ENCODE measurements at regions of chr2 and their contacts with region 1.

Region 1: DNA sequence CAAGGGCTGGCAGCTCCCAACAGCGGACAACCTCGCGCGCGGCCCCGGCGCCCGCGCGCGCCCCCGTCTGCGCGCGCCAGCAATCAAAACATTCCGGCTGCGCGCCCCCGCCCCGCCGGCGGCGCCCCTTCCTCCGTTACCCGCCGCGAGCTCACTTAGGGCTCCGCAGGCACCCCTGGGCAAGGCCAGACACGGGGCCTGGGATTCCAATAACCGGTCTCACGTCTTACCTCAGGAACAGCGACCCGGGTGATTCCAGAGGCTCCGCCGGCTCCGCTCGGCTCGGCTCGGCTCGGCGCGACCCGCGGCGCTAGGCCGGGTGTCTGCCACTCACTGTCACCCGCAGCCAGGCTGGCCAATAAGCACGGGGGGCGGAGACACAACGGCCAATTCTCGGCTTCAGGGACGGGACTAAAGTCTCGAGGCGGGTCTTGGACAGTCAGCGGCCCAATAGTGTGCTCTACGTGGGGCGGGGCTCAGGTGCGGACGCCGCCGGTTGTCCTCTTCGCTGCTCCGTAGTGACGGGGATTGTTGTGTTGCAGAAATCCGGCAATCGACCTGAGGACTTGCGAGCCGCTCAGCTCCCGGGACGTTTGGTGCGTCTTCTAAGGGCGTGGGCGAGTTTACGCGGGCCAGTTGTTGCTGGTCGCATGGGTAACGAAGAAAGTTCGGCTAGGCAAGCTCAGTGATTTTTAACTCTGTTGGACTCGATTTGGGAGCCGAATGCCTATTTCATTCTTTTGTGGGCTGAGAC is at the starts of genes ANKZF1 and ATG9A:
- DNase-seq: peak; percentile 96 to 99
- ATAC-seq: peak; percentile 96 to 99 (median 97)
- H3K4me3 ChIP-seq: peak within 1 kb of the TSS; percentile 88
- H3K4me3 Mint-ChIP-seq: peak within 1 kb of the TSS; percentile 100
- H3K27ac ChIP-seq: peak within 1 kb of the TSS; percentile 88
- H3K27ac Mint-ChIP-seq: peak within 1 kb of the TSS; percentile 99
- H3K4me1 ChIP-seq: peaks cover 34% of the 10 kb centered on the region
- H3K4me1 Mint-ChIP-seq: peaks cover 31 to 54% of the 10 kb centered on the region in 2 donors
- H3K27me3 ChIP-seq: no peaks in the 10 kb centered on the region
- H3K27me3 Mint-ChIP-seq: no peaks in the 10 kb centered on the region
- CTCF ChIP-seq: no peak
- total RNA-seq, gene ANKZF1: 100 to 148 (median 117) TPM
- total RNA-seq, gene ATG9A: 98.1 to 110 (median 108) TPM

Region 2: GRCh38 chr2:219087361-219087760 is 142.1 kb before region 1 on chr2:
- intact Hi-C with region 1: no loop called
- DNase-seq: no peak
- ATAC-seq: no peak
- H3K4me3 ChIP-seq: no peak overlapping the region
- H3K4me3 Mint-ChIP-seq: no peak overlapping the region
- H3K27ac ChIP-seq: no peak overlapping the region
- H3K27ac Mint-ChIP-seq: no peak overlapping the region
- H3K4me1 ChIP-seq: no peaks in the 10 kb centered on the region
- H3K4me1 Mint-ChIP-seq: peaks cover 12 to 23% of the 10 kb centered on the region in 2 donors
- H3K27me3 ChIP-seq: no peaks in the 10 kb centered on the region
- H3K27me3 Mint-ChIP-seq: no peaks in the 10 kb centered on the region
- CTCF ChIP-seq: no peak

Region 3: GRCh38 chr2:219197388-219197787 is 32.1 kb before region 1 on chr2:
- intact Hi-C with region 1: no loop called
- DNase-seq: peak in 1 of 2 donors; percentile 0
- ATAC-seq: no peak
- H3K4me3 ChIP-seq: no peak overlapping the region
- H3K4me3 Mint-ChIP-seq: no peak overlapping the region
- H3K27ac ChIP-seq: no peak overlapping the region
- H3K27ac Mint-ChIP-seq: no peak overlapping the region
- H3K4me1 ChIP-seq: peaks cover 11% of the 10 kb centered on the region
- H3K4me1 Mint-ChIP-seq: peaks cover 5 to 15% of the 10 kb centered on the region in 2 donors
- H3K27me3 ChIP-seq: no peaks in the 10 kb centered on the region
- H3K27me3 Mint-ChIP-seq: peaks cover 0 to 7% of the 10 kb centered on the region in 2 donors
- CTCF ChIP-seq: no peak

Region 4: DNA sequence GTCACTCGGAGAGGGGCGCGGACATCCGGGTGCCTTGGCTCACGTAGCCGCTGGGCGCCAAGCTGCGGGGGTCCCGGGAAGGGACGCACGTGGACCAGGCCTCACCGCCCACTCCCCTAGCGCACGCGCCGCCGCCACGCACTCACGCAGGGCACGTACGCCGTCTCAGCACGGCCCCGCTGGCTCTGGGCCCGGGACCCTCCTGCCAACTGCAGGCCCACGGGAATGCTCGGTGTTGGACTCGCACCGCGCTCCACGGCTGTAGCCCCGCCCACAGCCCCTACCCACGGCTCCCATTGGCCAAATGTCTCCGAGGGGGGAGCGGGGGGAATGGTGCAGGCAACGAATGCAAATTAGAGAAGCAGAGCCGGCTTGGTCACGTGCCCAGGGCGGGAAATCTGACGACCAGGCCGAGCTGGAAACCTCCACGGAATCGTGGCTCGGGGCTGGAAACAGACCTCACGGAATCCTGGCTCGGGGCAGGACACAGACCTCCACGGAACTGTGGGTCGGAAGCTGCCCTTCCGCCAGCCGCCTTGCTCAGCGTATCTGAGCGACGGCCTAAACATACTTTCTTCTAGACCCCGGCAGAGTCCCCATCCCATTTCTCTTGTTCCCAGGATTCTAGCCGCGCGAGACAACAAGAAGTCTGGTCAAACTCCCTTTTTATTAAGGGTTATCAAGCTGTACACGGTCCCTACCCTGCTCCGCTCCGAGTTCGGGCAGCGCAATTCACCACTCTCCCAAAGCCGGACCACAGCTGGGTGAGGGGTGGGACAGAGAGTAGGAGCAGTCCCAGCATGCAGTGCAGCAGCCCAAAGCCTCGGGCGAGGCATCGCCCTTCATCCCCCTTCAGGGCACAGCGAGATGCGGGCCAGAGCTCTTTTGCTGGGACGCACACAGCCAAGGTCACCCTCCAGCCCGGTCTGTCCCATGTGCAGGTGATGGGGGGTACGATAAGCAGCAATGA is 10.5 kb before region 1 on chr2 and contains the start of gene ABCB6:
- intact Hi-C with region 1: loop called (anchors 1 kb)
- DNase-seq: peak; percentile 73 to 92
- ATAC-seq: peak; percentile 83 to 89 (median 87)
- H3K4me3 ChIP-seq: peak within 1 kb of the TSS; percentile 46
- H3K4me3 Mint-ChIP-seq: peak within 1 kb of the TSS; percentile 83
- H3K27ac ChIP-seq: peak within 1 kb of the TSS; percentile 18
- H3K27ac Mint-ChIP-seq: peak within 1 kb of the TSS; percentile 62 to 75
- H3K4me1 ChIP-seq: peaks cover 25% of the 10 kb centered on the region
- H3K4me1 Mint-ChIP-seq: peaks cover 6 to 17% of the 10 kb centered on the region in 2 donors
- H3K27me3 ChIP-seq: no peaks in the 10 kb centered on the region
- H3K27me3 Mint-ChIP-seq: no peaks in the 10 kb centered on the region
- CTCF ChIP-seq: no peak
- total RNA-seq, gene ABCB6: 0.93 to 3.4 (median 1.9) TPM

Region 5: GRCh38 chr2:219245148-219245898 is 15.8 kb after region 1 on chr2 and contains the starts of genes GLB1L and STK16:
- intact Hi-C with region 1: loop called (anchors 2 kb)
- DNase-seq: peak; percentile 93 to 94
- ATAC-seq: peak; percentile 76 to 90 (median 84)
- H3K4me3 ChIP-seq: peak within 1 kb of the TSS; percentile 96
- H3K4me3 Mint-ChIP-seq: peak within 1 kb of the TSS; percentile 94
- H3K27ac ChIP-seq: peak within 1 kb of the TSS; percentile 97
- H3K27ac Mint-ChIP-seq: peak within 1 kb of the TSS; percentile 86 to 98
- H3K4me1 ChIP-seq: peaks cover 53% of the 10 kb centered on the region
- H3K4me1 Mint-ChIP-seq: peaks cover 45 to 60% of the 10 kb centered on the region in 2 donors
- H3K27me3 ChIP-seq: no peaks in the 10 kb centered on the region
- H3K27me3 Mint-ChIP-seq: no peaks in the 10 kb centered on the region
- CTCF ChIP-seq: no peak
- total RNA-seq, gene GLB1L: 4.3 to 7.7 (median 4.5) TPM
- total RNA-seq, gene STK16: 28.7 to 32.5 (median 32.4) TPM

Region 6: GRCh38 chr2:219294356-219295351 is 65.2 kb after region 1 on chr2:
- intact Hi-C with region 1: loop called (anchors 1 kb)
- DNase-seq: peak; percentile 88 to 96
- ATAC-seq: peak; percentile 95 to 97 (median 95)
- H3K4me3 ChIP-seq: peak overlapping the region; percentile 45
- H3K4me3 Mint-ChIP-seq: peak overlapping the region; percentile 73
- H3K27ac ChIP-seq: peak overlapping the region; percentile 69
- H3K27ac Mint-ChIP-seq: peak overlapping the region; percentile 78 to 80
- H3K4me1 ChIP-seq: peaks cover 14% of the 10 kb centered on the region
- H3K4me1 Mint-ChIP-seq: peaks cover 6 to 17% of the 10 kb centered on the region in 2 donors
- H3K27me3 ChIP-seq: peaks cover 7% of the 10 kb centered on the region
- H3K27me3 Mint-ChIP-seq: peaks cover 0 to 4% of the 10 kb centered on the region in 2 donors
- CTCF ChIP-seq: peak; percentile 99